Head of caudate nucleus (tissue), 42 donors: ENCODE measurements at regions of chr1 and their contacts with region 1.

Region 1: GRCh38 chr1:111755331-111756123 is at the start of gene DDX20:
- DNase-seq: peak; percentile 78 to 97 (median 93)

Region 2: GRCh38 chr1:111507411-111508201 is 247.9 kb before region 1 on chr1:
- intact Hi-C with region 1: loop called (anchors 10 kb)
- DNase-seq: peak in 39 of 42 donors; percentile 24 to 77 (median 59)

Region 3: GRCh38 chr1:111719674-111720132 is 35.8 kb before region 1 on chr1:
- intact Hi-C with region 1: loop called (anchors 5 kb)
- DNase-seq: no peak

Region 4: DNA sequence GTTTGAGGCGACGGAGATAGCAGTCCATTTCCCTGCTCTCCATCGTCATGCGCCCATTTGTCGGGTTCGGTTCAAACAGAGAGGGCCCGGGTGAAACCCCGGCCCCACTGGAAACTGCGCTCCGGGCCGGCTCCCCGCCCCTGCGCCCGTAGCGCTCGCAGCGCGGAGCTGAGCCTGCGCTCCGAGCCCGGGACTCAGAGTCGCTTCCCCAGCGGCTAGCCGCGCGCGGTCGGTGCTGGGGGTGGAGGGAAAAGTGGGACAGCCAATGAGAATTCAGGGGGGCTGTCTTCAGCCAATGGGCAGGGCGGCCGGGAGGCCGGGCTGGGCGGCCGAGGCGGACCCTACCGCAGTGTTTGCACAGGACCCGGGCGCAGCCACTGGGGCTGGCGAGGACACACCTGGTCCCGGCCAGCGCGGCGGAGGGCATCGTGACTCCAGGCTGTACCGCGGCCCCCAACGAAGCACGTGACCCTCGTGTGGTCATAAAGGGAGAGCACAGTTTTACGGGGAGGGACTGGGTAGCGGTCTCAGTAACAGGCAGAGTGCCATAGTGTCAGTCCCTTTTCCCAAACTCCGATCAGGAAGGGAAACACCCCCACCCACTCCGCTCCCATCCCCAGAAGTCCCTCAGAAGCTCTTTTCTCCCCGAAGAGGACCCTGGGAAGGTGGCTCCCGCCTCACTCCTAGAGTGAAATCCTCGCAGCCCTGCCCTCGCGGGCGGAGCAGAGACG is 16.2 kb before region 1 on chr1 and contains the start of gene INKA2:
- intact Hi-C with region 1: loop called (anchors 2 kb)
- DNase-seq: peak; percentile 71 to 96 (median 91)

Region 5: DNA sequence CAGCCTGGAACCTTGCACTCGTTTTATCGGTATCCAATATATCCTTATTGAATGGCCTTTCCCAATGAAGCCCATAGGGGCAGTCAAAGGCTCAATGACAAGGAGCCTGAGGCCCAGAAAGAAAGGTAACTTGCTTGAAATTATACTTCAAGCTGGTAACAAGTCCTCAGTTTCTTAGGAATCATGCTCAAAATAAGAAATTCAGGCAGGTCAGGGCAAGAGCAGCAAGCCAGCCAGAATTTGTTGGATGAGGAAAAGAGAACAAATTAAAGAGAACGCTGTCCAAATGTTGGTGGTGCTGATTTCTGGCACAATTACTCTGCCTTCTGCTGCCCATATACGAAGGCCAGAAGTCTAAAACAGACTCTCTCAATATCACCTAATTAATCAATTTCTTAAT is 77.8 kb after region 1 on chr1:
- intact Hi-C with region 1: no loop called
- DNase-seq: no peak

Region 6: DNA sequence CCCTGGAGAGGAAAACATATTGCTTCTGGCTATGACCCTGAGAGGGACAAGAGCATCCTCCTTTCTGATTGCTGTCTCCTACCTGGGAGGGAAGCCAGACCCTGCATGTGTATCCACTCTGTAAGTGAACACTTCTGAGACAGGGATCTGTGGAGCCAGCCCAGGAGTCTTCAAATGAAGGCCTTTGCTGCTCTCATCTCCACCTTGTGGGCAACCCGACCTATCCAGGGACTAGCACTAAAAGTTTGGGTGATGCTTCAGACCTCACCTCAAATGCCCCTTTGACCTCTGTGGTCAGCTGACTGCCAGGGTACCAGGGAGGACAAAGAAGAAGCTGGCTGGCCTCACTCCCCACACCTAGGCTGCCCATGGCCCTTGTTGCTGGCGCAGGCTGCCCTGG is 169.3 kb after region 1 on chr1:
- intact Hi-C with region 1: no loop called
- DNase-seq: peak in 2 of 42 donors; percentile 6 to 32